PC-3 (cell line): ENCODE measurements at regions of chr3 and their contacts with region 1.

Region 1: GRCh38 chr3:28667646-28668621 is 319.3 kb upstream of the AZI2 start:
- DNase-seq: peak; percentile 83
- ATAC-seq: peak; percentile 98
- H3K4me3 ChIP-seq: no peak overlapping the region
- H3K27ac ChIP-seq: no peak overlapping the region
- H3K4me1 ChIP-seq: no peaks in the 10 kb centered on the region
- H3K27me3 ChIP-seq: peaks cover 48% of the 10 kb centered on the region
- CTCF ChIP-seq: peak; percentile 93

Region 2: DNA sequence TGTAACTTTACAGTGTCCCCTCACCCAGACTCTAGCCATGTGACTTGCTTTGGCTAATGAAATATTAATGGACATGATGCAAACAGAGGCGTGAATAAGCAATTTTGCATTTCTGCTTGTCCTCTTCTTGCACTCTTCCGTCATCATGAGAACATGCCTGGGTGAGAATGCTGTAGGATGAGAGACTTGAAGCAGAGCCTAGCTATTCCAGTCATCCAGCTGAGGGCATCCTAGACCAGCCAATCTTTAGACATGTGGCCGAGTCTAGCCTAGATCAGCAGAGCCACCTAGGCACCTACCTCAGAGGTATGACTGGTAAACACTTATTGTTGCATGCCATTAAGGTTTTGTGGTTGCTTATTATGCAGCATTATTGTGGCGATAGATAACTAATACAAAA is 131.2 kb after region 1 on chr3:
- CTCF ChIA-PET with region 1: interaction called, 3 read pairs
- POLR2A ChIA-PET with region 1: no interaction called
- intact Hi-C with region 1: loop called (anchors 10 kb)
- DNase-seq: peak; percentile 42
- ATAC-seq: peak; percentile 57
- H3K4me3 ChIP-seq: no peak overlapping the region
- H3K27ac ChIP-seq: no peak overlapping the region
- H3K4me1 ChIP-seq: peaks cover 9% of the 10 kb centered on the region; the same call in 1 of the 2 replicates
- H3K27me3 ChIP-seq: no peaks in the 10 kb centered on the region
- CTCF ChIP-seq: peak; percentile 47

Region 3: DNA sequence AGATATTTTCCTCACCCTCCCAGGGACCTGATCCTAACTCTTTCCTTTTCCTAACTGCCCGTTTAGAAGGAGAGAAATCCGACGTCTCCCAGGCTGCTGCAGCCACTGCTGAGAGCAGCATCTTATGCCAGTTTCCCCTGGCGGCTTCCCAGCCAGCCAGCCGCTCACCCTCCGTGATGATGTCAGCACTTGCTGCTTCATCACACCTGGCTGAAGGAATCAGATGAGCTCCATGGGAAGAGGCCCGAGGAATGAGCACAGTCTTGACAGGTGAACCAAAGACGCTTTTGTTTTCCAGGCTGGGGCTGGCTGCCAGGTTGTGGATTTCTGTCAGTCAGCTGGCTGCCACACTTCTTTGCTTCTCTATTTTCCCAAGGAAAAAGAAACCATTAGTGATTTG is 167.8 kb after region 1 on chr3:
- CTCF ChIA-PET with region 1: no interaction called
- POLR2A ChIA-PET with region 1: no interaction called
- intact Hi-C with region 1: loop called (anchors 5 kb)
- DNase-seq: peak; percentile 47
- ATAC-seq: peak; percentile 50; the same call in 1 of the 2 replicates
- H3K4me3 ChIP-seq: no peak overlapping the region
- H3K27ac ChIP-seq: no peak overlapping the region
- H3K4me1 ChIP-seq: peaks cover 11% of the 10 kb centered on the region; the same call in 1 of the 2 replicates
- H3K27me3 ChIP-seq: no peaks in the 10 kb centered on the region
- CTCF ChIP-seq: no peak

Region 4: DNA sequence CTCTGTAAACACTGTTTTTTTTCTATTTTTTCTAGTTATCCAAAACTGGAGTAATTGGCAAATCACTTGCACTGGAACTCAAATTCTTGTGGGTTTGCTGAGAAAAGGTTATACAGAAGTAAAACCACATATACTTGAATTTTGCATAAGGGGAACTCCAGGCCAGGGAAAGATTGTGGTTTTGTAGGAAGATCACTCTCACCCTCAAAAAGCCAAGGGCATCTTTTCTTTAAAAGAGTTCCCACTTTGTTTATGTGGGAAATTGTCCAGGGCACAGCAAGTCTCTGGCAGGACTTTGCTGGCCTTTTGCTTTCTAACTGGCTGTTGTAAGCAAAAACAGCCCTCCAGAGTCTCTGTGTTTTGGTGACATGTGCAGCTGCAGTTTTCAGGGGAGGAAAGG is 272.6 kb after region 1 on chr3:
- CTCF ChIA-PET with region 1: no interaction called
- POLR2A ChIA-PET with region 1: no interaction called
- intact Hi-C with region 1: no loop called
- DNase-seq: no peak
- ATAC-seq: no peak
- H3K4me3 ChIP-seq: no peak overlapping the region
- H3K27ac ChIP-seq: no peak overlapping the region
- H3K4me1 ChIP-seq: 0 out of 2 replicates have a peak, but pooled peaks cover 4% of the 10 kb centered on the region
- H3K27me3 ChIP-seq: no peaks in the 10 kb centered on the region
- CTCF ChIP-seq: no peak

Region 5: GRCh38 chr3:28951773-28952556 is 284.0 kb after region 1 on chr3:
- CTCF ChIA-PET with region 1: no interaction called
- POLR2A ChIA-PET with region 1: no interaction called
- intact Hi-C with region 1: loop called (anchors 5 kb)
- DNase-seq: peak; percentile 77
- ATAC-seq: peak; percentile 97
- H3K4me3 ChIP-seq: no peak overlapping the region; the same call in 1 of the 2 replicates
- H3K27ac ChIP-seq: peak overlapping the region; percentile 71
- H3K4me1 ChIP-seq: peaks cover 20% of the 10 kb centered on the region
- H3K27me3 ChIP-seq: no peaks in the 10 kb centered on the region
- CTCF ChIP-seq: no peak